ENCODE measurements at regions of chr12 and their contacts with region 1.

Region 1: DNA sequence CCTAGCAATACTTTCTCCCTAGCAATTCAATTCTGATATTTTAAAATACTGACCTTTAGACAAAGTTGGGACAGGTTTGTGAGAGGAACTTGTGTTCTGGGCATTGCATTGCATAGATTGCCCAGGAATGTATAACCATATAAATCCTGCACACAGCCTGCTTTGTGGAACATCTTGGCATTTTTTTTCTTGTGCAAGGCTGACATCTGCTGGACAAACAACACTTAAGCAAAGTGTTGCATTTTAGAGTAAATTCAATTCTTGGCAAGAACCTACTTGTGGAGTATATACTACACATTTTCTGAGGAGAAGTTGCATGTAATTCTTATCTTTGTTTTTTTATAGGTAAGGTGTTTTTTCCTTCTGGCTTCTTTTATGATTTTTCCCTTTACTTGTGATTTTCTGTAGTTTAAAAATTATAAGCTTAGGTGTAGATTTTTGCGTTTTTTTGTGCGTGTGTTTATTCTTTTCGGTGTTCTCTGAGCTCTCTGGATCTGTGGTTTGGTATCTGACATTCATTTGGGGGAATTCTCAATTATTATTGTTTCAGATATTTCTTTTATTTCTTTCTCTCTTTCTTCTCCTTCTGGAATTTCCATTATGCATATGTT is 26.4 kb downstream of the TESPA1 start:
- DNase-seq: peak; percentile 29 to 72 (median 44)
- ATAC-seq: peak; percentile 87
- H3K4me3 ChIP-seq: no peak overlapping the region
- H3K27ac ChIP-seq: no peak overlapping the region
- H3K4me1 ChIP-seq: 0 out of 5 replicates have a peak, but pooled peaks cover 0 to 2% of the 10 kb centered on the region in 2 experiments
- H3K27me3 ChIP-seq: no peaks in the 10 kb centered on the region
- CTCF ChIP-seq: peak; percentile 64 to 90 (median 71)
- EP300 ChIP-seq: no peak
- POLR2A ChIP-seq: no peak
- RAD21 ChIP-seq: peak; percentile 94 to 97

Region 2: GRCh38 chr12:54603173-54603814 is 354.9 kb before region 1 on chr12:
- CTCF ChIA-PET with region 1: no interaction called
- POLR2A ChIA-PET with region 1: no interaction called
- in situ Hi-C with region 1: no loop called
- intact Hi-C with region 1: loop called (anchors 10 kb)
- DNase-seq: peak; percentile 72 to 79 (median 77)
- ATAC-seq: peak; percentile 98
- H3K4me3 ChIP-seq: no peak overlapping the region
- H3K27ac ChIP-seq: no peak overlapping the region
- H3K4me1 ChIP-seq: no peaks in the 10 kb centered on the region; a peak in 2 of 5 replicates
- H3K27me3 ChIP-seq: peaks cover 0 to 5% of the 10 kb centered on the region in 2 experiments; a peak in 2 of 5 replicates
- CTCF ChIP-seq: peak; percentile 82 to 89 (median 83)
- EP300 ChIP-seq: no peak
- POLR2A ChIP-seq: no peak
- RAD21 ChIP-seq: peak in 1 of 2 experiments; percentile 53; a peak in 2 of 4 replicates

Region 3: GRCh38 chr12:54701940-54702592 is 256.1 kb before region 1 on chr12:
- CTCF ChIA-PET with region 1: interaction called, 18 read pairs
- POLR2A ChIA-PET with region 1: no interaction called
- in situ Hi-C with region 1: no loop called
- intact Hi-C with region 1: loop called (anchors 5 kb)
- DNase-seq: peak; percentile 26 to 66 (median 35)
- ATAC-seq: peak; percentile 76
- H3K4me3 ChIP-seq: no peak overlapping the region
- H3K27ac ChIP-seq: no peak overlapping the region
- H3K4me1 ChIP-seq: no peaks in the 10 kb centered on the region
- H3K27me3 ChIP-seq: no peaks in the 10 kb centered on the region; a peak in 1 of 5 replicates
- CTCF ChIP-seq: peak; percentile 46 to 74 (median 61); a peak in 5 of 6 replicates
- EP300 ChIP-seq: no peak
- POLR2A ChIP-seq: no peak
- RAD21 ChIP-seq: peak; percentile 75

Region 4: GRCh38 chr12:54723379-54724256 is 234.5 kb before region 1 on chr12:
- CTCF ChIA-PET with region 1: interaction called, 18 read pairs
- POLR2A ChIA-PET with region 1: no interaction called
- in situ Hi-C with region 1: no loop called
- intact Hi-C with region 1: no loop called
- DNase-seq: peak; percentile 22 to 52 (median 32)
- ATAC-seq: peak; percentile 78
- H3K4me3 ChIP-seq: no peak overlapping the region
- H3K27ac ChIP-seq: no peak overlapping the region
- H3K4me1 ChIP-seq: no peaks in the 10 kb centered on the region
- H3K27me3 ChIP-seq: no peaks in the 10 kb centered on the region
- CTCF ChIP-seq: peak; percentile 56 to 70 (median 60); a peak in 5 of 6 replicates
- EP300 ChIP-seq: no peak
- POLR2A ChIP-seq: no peak
- RAD21 ChIP-seq: peak in 1 of 2 experiments; percentile 37; a peak in 1 of 4 replicates

Region 5: DNA sequence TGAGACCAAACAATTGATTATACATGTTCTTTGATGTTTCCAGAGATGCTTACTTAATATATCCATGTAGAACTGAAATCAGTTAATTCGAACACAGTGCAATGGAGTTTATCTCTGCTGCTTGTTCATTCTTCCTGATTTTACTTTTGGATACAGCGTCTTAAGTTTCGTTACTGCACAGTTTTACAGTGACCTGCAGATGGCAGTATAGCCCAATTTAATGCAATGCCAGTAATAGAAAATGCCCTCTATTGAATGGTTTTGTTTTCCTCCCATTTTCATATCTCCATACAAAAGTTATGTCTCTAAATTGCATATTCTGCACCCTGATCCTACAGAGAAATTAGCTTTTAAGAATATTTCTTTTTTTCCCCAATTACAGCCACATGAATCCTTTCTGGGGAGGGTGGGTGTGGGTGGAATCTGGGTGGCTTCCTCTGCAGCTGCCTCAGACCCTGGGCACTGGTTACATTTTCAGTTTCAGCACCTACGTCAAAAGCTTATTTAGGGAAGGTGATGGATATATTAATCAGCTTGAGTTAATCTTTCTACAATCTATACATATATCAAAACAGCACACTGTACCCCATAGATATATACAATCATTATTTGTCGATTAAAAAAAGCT is 208.8 kb before region 1 on chr12:
- CTCF ChIA-PET with region 1: interaction called, 27 read pairs
- POLR2A ChIA-PET with region 1: no interaction called
- in situ Hi-C with region 1: loop called (anchors 5 kb)
- intact Hi-C with region 1: loop called (anchors 2 kb)
- DNase-seq: peak; percentile 31 to 61 (median 45)
- ATAC-seq: peak; percentile 75
- H3K4me3 ChIP-seq: no peak overlapping the region
- H3K27ac ChIP-seq: no peak overlapping the region
- H3K4me1 ChIP-seq: no peaks in the 10 kb centered on the region
- H3K27me3 ChIP-seq: no peaks in the 10 kb centered on the region
- CTCF ChIP-seq: peak; percentile 64 to 87 (median 74); a peak in 5 of 6 replicates
- EP300 ChIP-seq: no peak
- POLR2A ChIP-seq: no peak
- RAD21 ChIP-seq: peak; percentile 92 to 93

Region 6: GRCh38 chr12:54759751-54760150 is 198.4 kb before region 1 on chr12:
- CTCF ChIA-PET with region 1: interaction called, 22 read pairs
- POLR2A ChIA-PET with region 1: no interaction called
- in situ Hi-C with region 1: no loop called
- intact Hi-C with region 1: loop called (anchors 2 kb)
- DNase-seq: peak in 2 of 4 experiments; percentile 17 to 53
- ATAC-seq: peak; percentile 86
- H3K4me3 ChIP-seq: no peak overlapping the region
- H3K27ac ChIP-seq: no peak overlapping the region
- H3K4me1 ChIP-seq: no peaks in the 10 kb centered on the region
- H3K27me3 ChIP-seq: no peaks in the 10 kb centered on the region
- CTCF ChIP-seq: peak; percentile 59 to 75 (median 75); a peak in 5 of 6 replicates
- EP300 ChIP-seq: no peak
- POLR2A ChIP-seq: no peak
- RAD21 ChIP-seq: peak; percentile 81 to 85

Region 7: DNA sequence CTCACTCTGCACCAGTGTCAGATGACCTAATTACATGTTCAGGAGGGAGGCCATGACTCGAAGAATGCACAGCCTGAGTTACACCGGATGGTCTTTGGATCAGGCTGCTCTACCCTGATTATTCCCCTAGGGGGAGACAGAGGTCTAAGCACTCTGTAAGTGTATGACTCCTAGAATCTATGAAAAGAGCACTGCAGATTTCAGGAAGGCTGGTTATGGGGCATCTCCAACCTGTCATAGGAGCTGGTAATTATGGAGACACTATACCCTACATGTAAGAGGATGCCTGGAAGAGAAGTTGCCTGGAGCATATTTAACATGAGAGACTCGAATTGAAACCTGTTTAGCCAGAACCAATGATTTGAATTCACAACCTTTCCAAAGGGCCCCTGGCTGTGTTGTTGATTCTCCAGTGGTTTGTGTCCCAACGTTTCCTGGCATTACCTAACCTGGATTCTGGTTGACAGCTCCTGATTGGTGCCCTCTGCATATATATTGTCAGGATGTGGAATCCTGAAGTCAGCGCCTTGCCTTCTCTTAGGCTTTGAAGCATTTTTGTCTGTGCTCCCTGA is 104.1 kb before region 1 on chr12 and contains the start of gene MUCL1:
- CTCF ChIA-PET with region 1: interaction called, 45 read pairs
- POLR2A ChIA-PET with region 1: no interaction called
- in situ Hi-C with region 1: loop called (anchors 5 kb)
- intact Hi-C with region 1: loop called (anchors 1 kb)
- DNase-seq: peak; percentile 69 to 79 (median 74)
- ATAC-seq: peak; percentile 99
- H3K4me3 ChIP-seq: no peak within 1 kb of the TSS
- H3K27ac ChIP-seq: no peak within 1 kb of the TSS
- H3K4me1 ChIP-seq: no peaks in the 10 kb centered on the region
- H3K27me3 ChIP-seq: no peaks in the 10 kb centered on the region; a peak in 1 of 5 replicates
- CTCF ChIP-seq: peak; percentile 76 to 91 (median 77)
- EP300 ChIP-seq: no peak
- POLR2A ChIP-seq: no peak
- RAD21 ChIP-seq: peak; percentile 96
- polyA plus RNA-seq, gene MUCL1: not detected